CD8-positive, alpha-beta T cell (primary cell): ENCODE measurements at regions of chr4 and their contacts with region 1.

Region 1: GRCh38 chr4:109608879-109609278 is 48.8 kb downstream of the MCUB start:
- DNase-seq: no peak
- ATAC-seq: no peak
- H3K4me3 ChIP-seq: no peak overlapping the region
- H3K4me3 Mint-ChIP-seq: peak overlapping the region; percentile 35
- H3K27ac ChIP-seq: no peak overlapping the region
- H3K27ac Mint-ChIP-seq: peak overlapping the region; percentile 60
- H3K4me1 ChIP-seq: peaks cover 29% of the 10 kb centered on the region
- H3K4me1 Mint-ChIP-seq: peaks cover 80% of the 10 kb centered on the region
- H3K27me3 ChIP-seq: no peaks in the 10 kb centered on the region
- H3K27me3 Mint-ChIP-seq: no peaks in the 10 kb centered on the region
- CTCF ChIP-seq: no peak

Region 2: GRCh38 chr4:109406338-109406931 is 202.4 kb before region 1 on chr4:
- CTCF ChIA-PET with region 1: no interaction called
- POLR2A ChIA-PET with region 1: no interaction called
- intact Hi-C with region 1: no loop called
- DNase-seq: peak in 4 of 9 experiments; percentile 26 to 73 (median 46)
- ATAC-seq: peak; percentile 57
- H3K4me3 ChIP-seq: no peak overlapping the region
- H3K4me3 Mint-ChIP-seq: no peak overlapping the region
- H3K27ac ChIP-seq: no peak overlapping the region
- H3K27ac Mint-ChIP-seq: no peak overlapping the region
- H3K4me1 ChIP-seq: no peaks in the 10 kb centered on the region
- H3K4me1 Mint-ChIP-seq: no peaks in the 10 kb centered on the region
- H3K27me3 ChIP-seq: no peaks in the 10 kb centered on the region
- H3K27me3 Mint-ChIP-seq: peaks cover 2% of the 10 kb centered on the region
- CTCF ChIP-seq: peak; percentile 72

Region 3: DNA sequence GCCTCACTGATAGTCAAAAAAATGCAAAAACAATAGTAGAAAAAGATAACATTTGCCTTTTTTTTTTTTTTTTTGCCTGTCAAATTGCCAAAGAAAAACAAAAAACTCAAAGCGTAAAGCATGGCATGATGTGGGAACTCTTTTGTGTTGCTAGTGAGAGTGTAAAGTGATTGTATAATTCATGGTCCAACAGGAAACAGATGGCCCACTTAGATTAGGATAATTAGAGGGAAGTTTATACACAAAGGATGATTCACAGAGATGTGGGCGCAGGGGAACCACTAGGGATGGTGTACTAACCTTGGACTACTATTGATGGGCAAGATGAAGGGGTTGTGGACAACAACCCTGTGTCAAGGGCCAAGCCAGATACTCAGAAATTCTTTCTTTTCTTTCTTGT is 32.4 kb before region 1 on chr4:
- CTCF ChIA-PET with region 1: no interaction called
- POLR2A ChIA-PET with region 1: no interaction called
- intact Hi-C with region 1: no loop called
- DNase-seq: no peak
- ATAC-seq: no peak
- H3K4me3 ChIP-seq: no peak overlapping the region
- H3K4me3 Mint-ChIP-seq: no peak overlapping the region
- H3K27ac ChIP-seq: no peak overlapping the region
- H3K27ac Mint-ChIP-seq: peak overlapping the region; percentile 28
- H3K4me1 ChIP-seq: peaks cover 36% of the 10 kb centered on the region
- H3K4me1 Mint-ChIP-seq: peaks cover 67% of the 10 kb centered on the region
- H3K27me3 ChIP-seq: no peaks in the 10 kb centered on the region
- H3K27me3 Mint-ChIP-seq: no peaks in the 10 kb centered on the region
- CTCF ChIP-seq: no peak

Region 4: GRCh38 chr4:109648266-109648996 is 39.6 kb after region 1 on chr4:
- CTCF ChIA-PET with region 1: no interaction called
- POLR2A ChIA-PET with region 1: interaction called, 3 read pairs
- intact Hi-C with region 1: loop called in 1 of 2 experiments (anchors 5 kb)
- DNase-seq: peak in 4 of 9 experiments; percentile 23 to 87 (median 56)
- ATAC-seq: peak; percentile 85
- H3K4me3 ChIP-seq: peak overlapping the region in 1 of 2 experiments; percentile 29
- H3K4me3 Mint-ChIP-seq: peak overlapping the region; percentile 76
- H3K27ac ChIP-seq: peak overlapping the region; percentile 45 to 61
- H3K27ac Mint-ChIP-seq: peak overlapping the region; percentile 92
- H3K4me1 ChIP-seq: peaks cover 73% of the 10 kb centered on the region
- H3K4me1 Mint-ChIP-seq: peaks cover 41% of the 10 kb centered on the region
- H3K27me3 ChIP-seq: no peaks in the 10 kb centered on the region
- H3K27me3 Mint-ChIP-seq: no peaks in the 10 kb centered on the region
- CTCF ChIP-seq: no peak

Region 5: GRCh38 chr4:109977854-109978501 is 369.1 kb after region 1 on chr4:
- CTCF ChIA-PET with region 1: no interaction called
- POLR2A ChIA-PET with region 1: no interaction called
- intact Hi-C with region 1: no loop called
- DNase-seq: peak in 2 of 9 experiments; percentile 29 to 47
- ATAC-seq: no peak
- H3K4me3 ChIP-seq: no peak overlapping the region
- H3K4me3 Mint-ChIP-seq: no peak overlapping the region
- H3K27ac ChIP-seq: no peak overlapping the region
- H3K27ac Mint-ChIP-seq: no peak overlapping the region
- H3K4me1 ChIP-seq: no peaks in the 10 kb centered on the region
- H3K4me1 Mint-ChIP-seq: no peaks in the 10 kb centered on the region
- H3K27me3 ChIP-seq: peaks cover 2 to 4% of the 10 kb centered on the region in 2 experiments
- H3K27me3 Mint-ChIP-seq: peaks cover 11% of the 10 kb centered on the region
- CTCF ChIP-seq: peak; percentile 49